ENCODE measurements at regions of chr7 and their contacts with region 1.

Region 1: DNA sequence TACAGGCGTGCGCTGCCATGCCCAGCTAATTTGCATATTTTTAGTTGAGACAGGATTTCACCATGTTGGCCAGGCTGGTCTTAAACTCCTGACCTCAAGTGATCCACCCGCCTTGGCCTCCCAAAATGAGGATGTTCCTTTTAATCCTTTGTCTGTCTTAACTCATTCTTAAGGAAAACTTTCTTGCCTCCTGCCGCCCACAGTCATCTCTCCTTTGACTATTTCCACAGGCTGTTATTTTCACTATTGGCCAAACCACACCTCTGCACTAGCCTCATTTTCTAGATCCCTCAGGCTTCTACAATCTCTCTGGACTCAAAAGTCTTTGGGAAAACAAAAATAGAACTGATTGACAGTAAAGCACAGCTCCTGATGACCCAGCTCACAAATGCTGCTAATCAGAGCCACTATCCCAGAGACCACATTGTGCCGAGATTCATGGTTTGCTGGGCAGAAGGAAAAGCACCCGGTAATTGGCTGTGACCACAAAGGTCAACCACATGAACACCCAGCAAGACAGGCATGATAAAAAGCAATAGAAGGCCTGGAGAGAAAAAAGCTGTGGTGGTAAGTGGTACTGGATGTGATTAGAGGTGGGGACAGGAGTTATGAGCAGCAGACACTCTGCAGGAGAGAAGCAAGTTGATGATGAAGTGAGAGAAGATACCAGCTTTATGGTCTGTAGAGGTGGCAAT is 44.1 kb upstream of the ZNRF2 start:
- DNase-seq: no peak
- ATAC-seq: peak; percentile 55 to 92

Region 2: GRCh38 chr7:29878081-29878688 is 362.1 kb before region 1 on chr7:
- intact Hi-C with region 1: no loop called
- DNase-seq: no peak
- ATAC-seq: no peak

Region 3: DNA sequence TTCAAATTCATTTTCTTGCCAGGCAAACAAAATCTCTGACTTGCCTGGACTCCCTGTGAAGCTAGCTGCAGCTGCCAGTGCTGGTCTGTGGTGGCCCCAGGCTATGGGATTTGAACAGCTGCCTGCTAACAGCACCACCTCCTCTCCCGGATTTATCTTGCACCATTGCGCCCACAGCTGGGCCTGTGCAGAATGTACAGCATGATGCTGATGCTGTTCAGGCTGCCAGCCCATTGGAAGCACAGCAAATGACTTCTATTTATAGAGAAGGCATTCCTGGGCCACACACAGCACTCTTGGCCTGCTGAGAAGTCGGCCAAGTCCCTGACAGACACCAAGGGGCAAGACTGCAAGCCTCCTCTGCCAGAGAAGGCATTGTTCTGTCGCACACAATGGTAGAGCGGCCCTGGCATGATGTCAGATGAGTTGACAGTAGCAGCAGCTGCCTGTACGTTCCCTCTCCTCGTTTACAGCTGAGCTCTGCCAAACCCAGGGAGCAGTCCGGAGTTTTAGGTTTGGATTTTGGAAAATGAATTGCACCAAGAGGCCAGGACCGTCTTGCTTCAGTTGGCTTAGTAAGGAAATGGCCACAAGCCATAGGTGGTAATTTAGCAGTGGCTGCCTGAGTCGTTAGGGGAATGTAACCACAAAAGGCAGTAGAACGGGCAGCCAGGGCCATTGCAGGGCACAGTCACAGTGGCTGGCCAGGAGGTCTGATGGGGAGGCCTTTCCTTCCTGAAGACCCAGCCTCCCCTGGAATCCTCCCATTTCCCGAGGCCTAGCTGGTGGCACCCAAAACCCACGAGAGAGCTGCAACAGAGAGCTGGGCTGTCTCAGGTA is 67.0 kb before region 1 on chr7:
- intact Hi-C with region 1: loop called in 1 of 2 experiments (anchors 10 kb)
- DNase-seq: peak; percentile 65
- ATAC-seq: peak; percentile 71 to 78

Region 4: GRCh38 chr7:30478349-30479201 is 238.3 kb after region 1 on chr7 and contains the start of gene NOD1:
- intact Hi-C with region 1: no loop called
- DNase-seq: peak; percentile 87
- ATAC-seq: peak; percentile 92 to 94
- total RNA-seq, gene NOD1: 10.6 to 18.1 TPM

Measured in left cardiac atrium (tissue), 4 donors.